Endothelial cell of umbilical vein (primary cell): ENCODE measurements at regions of chr14 and their contacts with region 1.

Region 1: DNA sequence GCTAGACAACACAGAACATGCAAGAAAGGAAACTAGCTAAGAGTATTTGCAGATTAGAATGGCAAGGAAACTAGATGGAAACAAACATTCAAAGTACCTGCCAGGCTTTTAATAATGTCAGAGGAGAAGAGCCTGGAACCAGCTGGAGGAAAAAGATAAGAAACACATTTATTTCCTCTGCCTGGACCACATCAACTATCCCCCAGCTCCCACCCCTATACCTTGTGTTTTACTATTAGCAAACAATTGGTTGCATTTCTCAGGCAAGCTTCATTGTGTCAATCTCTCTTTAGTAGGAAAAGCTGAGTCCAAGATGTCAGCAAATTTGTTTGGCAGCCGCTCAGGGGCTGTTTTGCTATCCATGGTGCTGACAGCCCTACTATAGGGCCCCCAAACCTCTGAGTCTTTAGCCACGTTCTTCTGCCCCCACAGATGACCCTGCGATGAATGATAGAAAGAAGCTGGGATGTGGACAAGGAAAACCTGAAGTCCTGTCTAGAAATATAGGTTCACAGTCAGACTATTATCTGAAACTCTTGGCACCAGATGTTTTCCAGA is 11.6 kb upstream of the SYNDIG1L start:
- DNase-seq: peak; percentile 38
- H3K4me3 ChIP-seq: no peak overlapping the region
- H3K27ac ChIP-seq: no peak overlapping the region
- H3K4me1 ChIP-seq: no peaks in the 10 kb centered on the region
- H3K27me3 ChIP-seq: peaks cover 15 to 23% of the 10 kb centered on the region in 2 experiments
- CTCF ChIP-seq: no peak
- POLR2A ChIP-seq: no peak

Region 2: DNA sequence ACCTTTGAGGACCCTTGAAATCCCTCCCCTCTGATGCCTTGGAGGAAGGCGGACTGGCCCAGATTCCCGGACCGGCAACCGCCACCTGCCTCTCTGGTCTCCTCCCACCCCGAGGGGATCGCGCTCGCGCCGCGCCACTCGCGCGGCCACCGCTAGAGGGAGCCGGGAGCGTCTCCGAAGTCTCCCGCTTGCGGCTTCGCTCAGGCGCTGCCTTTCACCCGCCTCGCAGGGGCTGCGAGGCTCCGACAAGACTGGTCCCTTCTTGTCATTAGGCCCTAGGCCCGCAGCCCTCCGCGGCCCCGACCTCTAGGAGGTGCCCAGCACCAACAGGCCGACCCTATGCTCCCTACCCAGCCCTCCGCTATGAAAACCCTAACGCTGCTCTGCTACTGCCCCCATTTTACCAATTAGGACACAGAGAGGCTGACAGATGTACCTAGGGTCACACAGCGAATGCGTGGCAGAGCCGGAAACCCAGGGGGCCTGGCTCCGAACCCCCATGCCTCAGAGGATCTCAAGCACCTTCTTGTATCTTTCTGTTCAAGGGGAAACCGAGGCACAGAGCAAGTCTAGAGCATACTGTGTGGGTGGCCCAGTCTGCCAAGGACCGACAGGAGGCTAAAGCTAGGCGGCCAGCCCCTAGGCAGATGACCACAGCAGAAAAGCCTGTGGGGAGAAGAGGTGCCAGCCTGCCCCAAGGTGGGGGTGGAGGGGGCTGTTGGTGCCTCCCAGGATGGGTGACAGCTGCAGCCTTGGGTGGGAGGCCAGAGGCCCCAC is 219.7 kb before region 1 on chr14:
- CTCF ChIA-PET with region 1: no interaction called
- POLR2A ChIA-PET with region 1: no interaction called
- dilution Hi-C with region 1: no loop called
- intact Hi-C with region 1: no loop called
- DNase-seq: peak; percentile 65
- H3K4me3 ChIP-seq: no peak overlapping the region
- H3K27ac ChIP-seq: no peak overlapping the region
- H3K4me1 ChIP-seq: no peaks in the 10 kb centered on the region
- H3K27me3 ChIP-seq: peaks cover 10 to 17% of the 10 kb centered on the region in 2 experiments
- CTCF ChIP-seq: peak; percentile 95 to 100
- POLR2A ChIP-seq: no peak

Region 3: GRCh38 chr14:74414403-74415114 is 23.0 kb before region 1 on chr14:
- CTCF ChIA-PET with region 1: no interaction called
- POLR2A ChIA-PET with region 1: no interaction called
- dilution Hi-C with region 1: no loop called
- intact Hi-C with region 1: no loop called
- DNase-seq: no peak
- H3K4me3 ChIP-seq: no peak overlapping the region
- H3K27ac ChIP-seq: no peak overlapping the region
- H3K4me1 ChIP-seq: no peaks in the 10 kb centered on the region
- H3K27me3 ChIP-seq: peaks cover 22 to 36% of the 10 kb centered on the region in 2 experiments
- CTCF ChIP-seq: no peak
- POLR2A ChIP-seq: no peak

Region 4: GRCh38 chr14:76045773-76046172 is 1608.2 kb after region 1 on chr14:
- CTCF ChIA-PET with region 1: no interaction called
- POLR2A ChIA-PET with region 1: interaction called, 11 read pairs
- dilution Hi-C with region 1: no loop called
- intact Hi-C with region 1: no loop called
- DNase-seq: no peak
- H3K4me3 ChIP-seq: no peak overlapping the region
- H3K27ac ChIP-seq: no peak overlapping the region
- H3K4me1 ChIP-seq: no peaks in the 10 kb centered on the region
- H3K27me3 ChIP-seq: no peaks in the 10 kb centered on the region
- CTCF ChIP-seq: no peak
- POLR2A ChIP-seq: no peak